CD4-positive, alpha-beta memory T cell (primary cell): ENCODE measurements at regions of chr17 and their contacts with region 1.

Region 1: DNA sequence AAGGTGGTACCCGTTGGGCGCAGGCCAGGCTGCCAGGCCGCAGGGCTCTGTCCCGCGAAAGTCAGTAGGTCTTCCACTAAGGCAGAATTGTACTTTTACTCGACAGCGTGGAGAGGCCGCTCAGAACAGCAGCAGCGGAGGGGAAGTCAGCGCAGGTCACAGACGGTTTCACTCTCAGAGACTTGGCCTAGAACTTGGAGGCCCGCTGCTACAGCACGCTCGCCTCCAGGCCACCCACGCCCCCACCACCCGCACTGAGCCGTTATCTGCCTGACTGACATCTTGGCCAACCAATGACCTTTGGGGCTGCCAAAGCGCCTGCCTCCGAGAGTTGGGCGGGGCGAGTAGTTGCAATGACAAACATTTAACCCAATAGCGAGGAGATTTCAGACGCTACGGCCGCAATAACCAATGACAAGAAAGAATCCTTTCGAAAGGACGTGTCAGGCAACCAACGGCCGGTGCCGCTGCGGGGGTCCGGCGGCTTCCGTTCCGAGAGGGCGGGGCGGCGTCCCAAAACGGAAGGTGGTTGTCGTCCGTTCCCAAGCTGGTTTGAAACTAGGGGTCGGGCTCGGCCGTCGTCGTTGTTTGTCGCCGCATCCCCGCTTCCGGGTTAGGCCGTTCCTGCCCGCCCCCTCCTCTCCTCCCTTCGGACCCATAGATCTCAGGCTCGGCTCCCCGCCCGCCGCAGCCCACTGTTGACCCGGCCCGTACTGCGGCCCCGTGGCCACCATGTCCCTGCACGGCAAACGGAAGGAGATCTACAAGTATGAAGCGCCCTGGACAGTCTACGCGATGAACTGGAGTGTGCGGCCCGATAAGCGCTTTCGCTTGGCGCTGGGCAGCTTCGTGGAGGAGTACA is at the start of gene DCAF7:
- DNase-seq: peak; percentile 99 to 100 (median 99)
- H3K4me3 ChIP-seq: peak within 1 kb of the TSS; percentile 90 to 91
- H3K4me3 Mint-ChIP-seq: peak within 1 kb of the TSS; percentile 92 to 99 (median 97)
- H3K27ac ChIP-seq: peak within 1 kb of the TSS; percentile 91
- H3K27ac Mint-ChIP-seq: peak within 1 kb of the TSS; percentile 90 to 98 (median 97)
- H3K4me1 ChIP-seq: peaks cover 41% of the 10 kb centered on the region
- H3K4me1 Mint-ChIP-seq: peaks cover 26 to 51% (median 36%) of the 10 kb centered on the region in 4 donors
- H3K27me3 ChIP-seq: no peaks in the 10 kb centered on the region
- H3K27me3 Mint-ChIP-seq: no peaks in the 10 kb centered on the region
- total RNA-seq, gene DCAF7: 88.1 to 93.0 TPM

Region 2: GRCh38 chr17:63369233-63369632 is 180.9 kb before region 1 on chr17:
- CTCF ChIA-PET with region 1: no interaction called
- POLR2A ChIA-PET with region 1: no interaction called
- intact Hi-C with region 1: no loop called
- DNase-seq: no peak
- H3K4me3 ChIP-seq: no peak overlapping the region
- H3K4me3 Mint-ChIP-seq: no peak overlapping the region
- H3K27ac ChIP-seq: no peak overlapping the region
- H3K27ac Mint-ChIP-seq: no peak overlapping the region
- H3K4me1 ChIP-seq: no peaks in the 10 kb centered on the region
- H3K4me1 Mint-ChIP-seq: no peaks in the 10 kb centered on the region
- H3K27me3 ChIP-seq: no peaks in the 10 kb centered on the region
- H3K27me3 Mint-ChIP-seq: peaks cover 0 to 3% of the 10 kb centered on the region in 2 donors

Region 3: DNA sequence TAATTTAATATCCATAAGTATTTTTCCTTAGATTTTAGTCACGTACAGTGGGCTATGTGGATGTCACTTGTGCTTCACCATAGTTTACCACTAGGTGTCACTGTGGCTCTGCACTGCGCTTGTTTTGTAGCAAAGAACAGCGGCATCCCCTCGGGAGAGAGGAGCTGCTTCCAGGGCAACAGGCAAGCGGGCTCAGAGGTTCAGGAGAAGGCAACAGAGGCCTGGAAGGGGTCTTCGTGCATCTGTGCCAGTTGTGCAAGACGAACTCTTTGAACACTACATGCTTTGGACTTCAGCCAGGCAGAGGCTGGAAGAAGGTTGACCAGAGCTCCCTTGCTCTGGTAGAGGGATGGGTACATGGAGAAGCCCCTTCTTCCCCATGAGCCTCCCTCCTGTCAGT is 124.7 kb before region 1 on chr17:
- CTCF ChIA-PET with region 1: interaction called, 10 read pairs
- POLR2A ChIA-PET with region 1: interaction called, 4 read pairs
- intact Hi-C with region 1: no loop called
- DNase-seq: peak; percentile 68 to 74 (median 72)
- H3K4me3 ChIP-seq: no peak overlapping the region
- H3K4me3 Mint-ChIP-seq: peak overlapping the region; percentile 32 to 82 (median 48)
- H3K27ac ChIP-seq: no peak overlapping the region
- H3K27ac Mint-ChIP-seq: peak overlapping the region in 5 of 7 donors; percentile 47 to 87 (median 67)
- H3K4me1 ChIP-seq: peaks cover 49% of the 10 kb centered on the region
- H3K4me1 Mint-ChIP-seq: peaks cover 26 to 54% (median 44%) of the 10 kb centered on the region in 4 donors
- H3K27me3 ChIP-seq: no peaks in the 10 kb centered on the region
- H3K27me3 Mint-ChIP-seq: no peaks in the 10 kb centered on the region

Region 4: GRCh38 chr17:63434876-63435684 is 115.1 kb before region 1 on chr17:
- CTCF ChIA-PET with region 1: no interaction called
- POLR2A ChIA-PET with region 1: interaction called, 11 read pairs
- intact Hi-C with region 1: loop called (anchors 5 kb)
- DNase-seq: peak; percentile 70 to 82 (median 76)
- H3K4me3 ChIP-seq: no peak overlapping the region
- H3K4me3 Mint-ChIP-seq: peak overlapping the region in 7 of 8 donors; percentile 48 to 79 (median 65)
- H3K27ac ChIP-seq: no peak overlapping the region
- H3K27ac Mint-ChIP-seq: peak overlapping the region; percentile 86 to 97 (median 92)
- H3K4me1 ChIP-seq: peaks cover 56% of the 10 kb centered on the region
- H3K4me1 Mint-ChIP-seq: peaks cover 15 to 70% (median 41%) of the 10 kb centered on the region in 4 donors
- H3K27me3 ChIP-seq: no peaks in the 10 kb centered on the region
- H3K27me3 Mint-ChIP-seq: no peaks in the 10 kb centered on the region

Region 5: DNA sequence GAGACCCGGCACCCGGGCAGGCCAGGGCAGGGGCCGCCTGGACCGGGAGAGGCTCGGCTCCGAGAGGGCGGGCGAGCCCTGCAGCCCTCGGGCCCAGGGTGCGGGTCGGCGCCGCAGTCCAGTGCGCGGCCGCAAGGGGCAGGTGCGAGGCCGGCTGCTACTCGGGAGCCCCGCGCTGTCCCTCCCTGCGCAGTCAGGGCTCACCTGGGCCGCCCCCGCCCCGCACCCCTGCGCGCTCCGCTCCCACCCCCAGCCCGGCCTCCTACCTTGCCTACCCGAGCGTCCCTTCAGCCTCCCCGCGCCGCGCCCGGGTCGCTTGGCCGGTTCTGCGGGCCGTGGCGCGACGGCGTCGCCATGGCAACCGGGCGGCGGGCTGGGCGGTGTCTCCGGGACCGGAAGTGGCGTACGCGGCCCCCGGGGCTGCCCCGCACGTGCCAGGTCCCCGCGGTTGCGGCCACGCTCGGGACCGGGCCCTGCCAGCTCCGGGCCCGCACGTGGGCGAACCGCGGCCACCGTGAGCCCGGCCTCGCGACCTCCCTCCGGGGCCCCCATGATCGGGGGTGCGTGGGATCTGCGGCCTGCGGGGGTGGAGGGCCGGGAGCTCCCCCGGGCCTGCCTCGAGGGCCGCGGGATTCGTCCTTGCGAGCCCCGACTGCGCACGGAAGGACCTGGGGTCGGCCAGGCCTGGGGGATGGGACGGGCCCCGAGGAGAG is 104.0 kb before region 1 on chr17 and contains the start of gene CYB561:
- CTCF ChIA-PET with region 1: no interaction called
- POLR2A ChIA-PET with region 1: interaction called, 7 read pairs
- intact Hi-C with region 1: loop called (anchors 5 kb)
- DNase-seq: peak; percentile 74 to 81 (median 75)
- H3K4me3 ChIP-seq: peak within 1 kb of the TSS; percentile 67 to 73
- H3K4me3 Mint-ChIP-seq: peak within 1 kb of the TSS; percentile 80 to 89 (median 85)
- H3K27ac ChIP-seq: peak within 1 kb of the TSS; percentile 94
- H3K27ac Mint-ChIP-seq: peak within 1 kb of the TSS; percentile 91 to 98 (median 95)
- H3K4me1 ChIP-seq: peaks cover 48% of the 10 kb centered on the region
- H3K4me1 Mint-ChIP-seq: peaks cover 25 to 60% (median 43%) of the 10 kb centered on the region in 4 donors
- H3K27me3 ChIP-seq: no peaks in the 10 kb centered on the region
- H3K27me3 Mint-ChIP-seq: peaks cover 0 to 3% of the 10 kb centered on the region in 2 donors
- total RNA-seq, gene CYB561: 81.0 to 83.7 TPM

Region 6: GRCh38 chr17:63519972-63520882 is 29.9 kb before region 1 on chr17:
- CTCF ChIA-PET with region 1: no interaction called
- POLR2A ChIA-PET with region 1: no interaction called
- intact Hi-C with region 1: no loop called
- DNase-seq: no peak
- H3K4me3 ChIP-seq: no peak overlapping the region
- H3K4me3 Mint-ChIP-seq: no peak overlapping the region
- H3K27ac ChIP-seq: no peak overlapping the region
- H3K27ac Mint-ChIP-seq: no peak overlapping the region
- H3K4me1 ChIP-seq: no peaks in the 10 kb centered on the region
- H3K4me1 Mint-ChIP-seq: peaks cover 0 to 8% (median 3%) of the 10 kb centered on the region in 4 donors
- H3K27me3 ChIP-seq: peaks cover 6% of the 10 kb centered on the region
- H3K27me3 Mint-ChIP-seq: peaks cover 13 to 15% of the 10 kb centered on the region in 2 donors

Region 7: DNA sequence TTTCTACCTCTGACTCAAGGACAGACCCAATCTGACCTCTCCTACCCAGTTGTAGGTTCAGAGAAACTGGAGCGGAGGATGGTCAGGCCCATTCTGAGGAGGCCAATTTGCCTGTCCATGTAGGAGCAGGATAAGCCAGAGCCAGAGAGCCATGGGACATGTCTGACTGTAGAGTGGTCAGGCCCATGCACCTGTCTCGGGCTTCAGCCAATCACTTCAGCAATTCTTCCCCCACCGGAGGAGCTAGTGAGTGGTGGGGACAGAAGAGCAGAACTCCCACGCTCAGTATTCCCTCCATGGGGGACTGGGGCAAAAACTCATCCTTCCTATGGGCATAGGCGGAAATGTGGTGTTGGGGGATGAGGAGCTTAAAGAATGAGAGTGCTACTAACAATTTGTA is 14.4 kb after region 1 on chr17:
- CTCF ChIA-PET with region 1: interaction called, 12 read pairs
- POLR2A ChIA-PET with region 1: interaction called, 11 read pairs
- intact Hi-C with region 1: no loop called
- DNase-seq: no peak
- H3K4me3 ChIP-seq: no peak overlapping the region
- H3K4me3 Mint-ChIP-seq: no peak overlapping the region
- H3K27ac ChIP-seq: no peak overlapping the region
- H3K27ac Mint-ChIP-seq: peak overlapping the region in 4 of 7 donors; percentile 8 to 79 (median 36)
- H3K4me1 ChIP-seq: peaks cover 43% of the 10 kb centered on the region
- H3K4me1 Mint-ChIP-seq: peaks cover 42 to 80% (median 61%) of the 10 kb centered on the region in 4 donors
- H3K27me3 ChIP-seq: no peaks in the 10 kb centered on the region
- H3K27me3 Mint-ChIP-seq: no peaks in the 10 kb centered on the region

Region 8: DNA sequence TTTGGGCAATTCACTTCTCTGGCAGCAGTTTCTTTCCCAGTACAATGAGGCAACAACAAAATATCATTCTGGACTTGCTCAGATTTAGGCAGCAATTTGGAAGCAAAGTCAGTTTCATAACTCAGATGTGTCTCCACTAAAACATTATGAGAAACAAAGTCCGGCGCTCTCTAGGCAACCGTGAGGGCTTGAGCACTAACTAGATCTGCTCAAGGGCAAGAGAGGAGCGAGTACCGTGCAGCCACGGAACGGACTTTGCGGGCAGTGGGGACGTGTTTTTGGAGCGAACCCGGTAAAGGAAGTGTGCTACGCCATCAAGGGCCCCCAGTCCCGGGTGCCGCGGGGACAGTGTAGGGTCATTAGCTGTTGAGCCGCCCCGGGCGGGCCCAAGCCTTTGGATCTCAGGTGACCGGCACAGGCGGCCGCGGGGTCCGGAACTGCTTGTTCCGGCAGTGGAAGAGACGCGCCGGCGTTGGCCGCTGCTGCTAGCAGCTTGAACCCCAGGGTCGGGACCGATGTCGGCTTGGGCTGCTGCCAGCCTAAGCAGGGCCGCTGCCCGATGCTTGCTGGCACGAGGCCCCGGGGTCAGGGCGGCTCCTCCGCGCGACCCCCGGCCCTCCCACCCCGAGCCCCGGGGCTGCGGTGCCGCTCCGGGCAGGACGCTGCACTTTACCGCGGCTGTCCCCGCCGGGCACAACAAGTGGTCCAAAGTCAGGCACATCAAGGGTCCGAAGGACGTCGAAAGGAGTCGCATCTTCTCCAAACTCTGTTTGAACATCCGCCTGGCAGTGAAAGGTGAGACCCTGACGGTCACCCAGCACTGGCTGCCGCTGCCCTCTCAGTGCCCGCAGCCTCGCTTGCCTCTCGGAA is 50.6 kb after region 1 on chr17 and contains the start of gene TACO1:
- CTCF ChIA-PET with region 1: interaction called, 3 read pairs
- POLR2A ChIA-PET with region 1: interaction called, 12 read pairs
- intact Hi-C with region 1: loop called (anchors 2 kb)
- DNase-seq: peak; percentile 65 to 71 (median 69)
- H3K4me3 ChIP-seq: peak within 1 kb of the TSS; percentile 59 to 69
- H3K4me3 Mint-ChIP-seq: peak within 1 kb of the TSS; percentile 90 to 98 (median 95)
- H3K27ac ChIP-seq: peak within 1 kb of the TSS; percentile 70
- H3K27ac Mint-ChIP-seq: peak within 1 kb of the TSS; percentile 91 to 97 (median 95)
- H3K4me1 ChIP-seq: peaks cover 55% of the 10 kb centered on the region
- H3K4me1 Mint-ChIP-seq: peaks cover 34 to 57% (median 42%) of the 10 kb centered on the region in 4 donors
- H3K27me3 ChIP-seq: no peaks in the 10 kb centered on the region
- H3K27me3 Mint-ChIP-seq: no peaks in the 10 kb centered on the region
- total RNA-seq, gene TACO1: 17.7 to 20.3 TPM

Region 9: DNA sequence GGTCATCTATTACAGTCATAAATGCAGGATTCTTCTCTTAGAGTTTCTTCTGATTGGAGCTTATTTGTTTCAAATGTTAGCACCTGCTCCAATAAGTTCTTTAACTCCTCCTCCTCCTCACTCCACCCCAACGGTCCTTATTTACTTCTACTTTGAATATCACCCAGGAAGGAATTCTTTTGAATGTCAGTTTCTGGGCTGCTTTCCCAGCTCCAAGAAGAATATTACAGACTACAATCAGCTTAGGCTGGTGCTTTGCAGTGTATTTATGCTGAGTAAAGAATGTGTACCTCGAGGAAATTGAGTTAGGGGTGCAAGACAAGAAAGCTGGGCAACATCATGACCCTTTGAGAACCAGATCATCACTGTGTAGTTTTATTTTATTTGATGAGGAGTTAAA is 102.9 kb after region 1 on chr17:
- CTCF ChIA-PET with region 1: no interaction called
- POLR2A ChIA-PET with region 1: no interaction called
- intact Hi-C with region 1: no loop called
- DNase-seq: no peak
- H3K4me3 ChIP-seq: no peak overlapping the region
- H3K4me3 Mint-ChIP-seq: no peak overlapping the region
- H3K27ac ChIP-seq: no peak overlapping the region
- H3K27ac Mint-ChIP-seq: peak overlapping the region in 3 of 7 donors; percentile 8 to 64 (median 39)
- H3K4me1 ChIP-seq: peaks cover 8% of the 10 kb centered on the region
- H3K4me1 Mint-ChIP-seq: peaks cover 7 to 31% (median 15%) of the 10 kb centered on the region in 4 donors
- H3K27me3 ChIP-seq: no peaks in the 10 kb centered on the region
- H3K27me3 Mint-ChIP-seq: no peaks in the 10 kb centered on the region

Region 10: DNA sequence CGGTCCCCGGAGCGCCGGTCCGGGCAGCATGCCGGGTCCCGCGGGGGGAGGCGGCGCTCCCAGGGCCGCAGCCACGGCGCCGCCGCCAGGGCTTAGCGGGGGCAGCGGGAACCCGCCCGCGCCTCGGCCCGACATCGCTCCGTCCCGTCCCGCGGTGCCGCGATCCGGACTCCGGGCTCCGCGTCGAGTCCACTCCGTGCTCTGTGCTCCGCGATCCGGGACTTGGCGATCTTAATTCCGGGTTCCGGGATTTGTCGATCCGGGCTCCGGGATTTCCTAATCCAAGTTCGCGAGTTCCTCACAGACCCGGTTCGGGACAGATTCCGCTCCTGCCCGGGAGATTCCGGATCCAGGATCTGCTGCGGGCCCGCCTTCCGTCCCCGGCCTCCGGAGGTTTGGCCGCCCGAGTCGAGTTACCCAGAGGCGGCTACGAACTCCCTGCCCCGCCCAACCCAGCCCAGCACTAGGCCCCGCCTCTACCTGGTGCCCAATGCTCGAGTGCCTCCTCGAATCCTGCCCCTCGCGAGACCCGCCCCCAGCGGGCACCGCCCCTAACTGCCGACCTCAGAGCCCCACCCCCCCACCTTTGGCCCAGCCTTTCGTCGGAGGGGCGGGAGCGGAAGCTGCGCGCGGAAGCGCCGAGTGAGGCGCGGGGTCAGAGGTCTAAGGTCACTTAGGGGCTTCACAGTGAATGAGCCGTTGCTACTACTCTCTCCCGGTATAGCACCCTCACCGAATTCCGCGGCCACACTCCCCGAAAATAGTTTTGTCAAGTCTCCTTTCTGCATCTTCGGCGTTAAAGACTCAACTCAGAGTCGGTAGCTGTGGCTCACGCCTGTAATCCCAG is 292.6 kb after region 1 on chr17 and contains the start of gene SMARCD2:
- CTCF ChIA-PET with region 1: no interaction called
- POLR2A ChIA-PET with region 1: no interaction called
- intact Hi-C with region 1: loop called (anchors 1 kb)
- DNase-seq: peak; percentile 97 to 98 (median 98)
- H3K4me3 ChIP-seq: peak within 1 kb of the TSS; percentile 58 to 72
- H3K4me3 Mint-ChIP-seq: peak within 1 kb of the TSS; percentile 86 to 97 (median 94)
- H3K27ac ChIP-seq: peak within 1 kb of the TSS; percentile 84
- H3K27ac Mint-ChIP-seq: peak within 1 kb of the TSS; percentile 87 to 96 (median 95)
- H3K4me1 ChIP-seq: peaks cover 48% of the 10 kb centered on the region
- H3K4me1 Mint-ChIP-seq: peaks cover 17 to 57% (median 35%) of the 10 kb centered on the region in 4 donors
- H3K27me3 ChIP-seq: no peaks in the 10 kb centered on the region
- H3K27me3 Mint-ChIP-seq: no peaks in the 10 kb centered on the region
- total RNA-seq, gene SMARCD2: 113 to 114 TPM